Common myeloid progenitor, CD34-positive (primary cell): ENCODE measurements at regions of chr10 and their contacts with region 1.

Region 1: DNA sequence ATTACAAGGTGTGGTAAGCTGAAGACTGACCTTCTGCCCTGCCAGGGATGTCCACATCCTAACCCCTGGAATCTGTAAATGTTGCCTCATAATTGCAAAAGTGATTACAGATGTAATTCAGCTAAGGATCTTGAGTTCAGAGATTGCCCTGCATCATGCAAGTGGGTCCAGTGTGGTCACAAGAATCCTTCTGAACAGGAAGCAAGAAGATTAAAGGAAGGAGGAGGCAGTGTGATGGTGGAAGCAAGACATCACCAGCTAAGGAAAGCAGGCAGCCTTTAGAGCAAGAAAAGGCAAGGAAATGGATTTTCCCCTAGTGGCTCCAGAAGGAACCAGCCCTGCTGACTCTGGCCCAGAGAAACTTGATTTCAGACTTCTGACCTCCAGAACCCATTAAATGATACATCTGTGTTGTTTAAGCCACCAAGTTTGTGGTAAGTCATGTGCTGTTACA is 78.1 kb downstream of the USP6NL start:
- DNase-seq: peak in 2 of 3 donors; percentile 66 to 73
- H3K4me3 ChIP-seq: no peak overlapping the region
- H3K27ac ChIP-seq: no peak overlapping the region
- H3K4me1 ChIP-seq: peaks cover 20 to 57% (median 38%) of the 10 kb centered on the region in 4 experiments
- H3K27me3 ChIP-seq: no peaks in the 10 kb centered on the region

Region 2: DNA sequence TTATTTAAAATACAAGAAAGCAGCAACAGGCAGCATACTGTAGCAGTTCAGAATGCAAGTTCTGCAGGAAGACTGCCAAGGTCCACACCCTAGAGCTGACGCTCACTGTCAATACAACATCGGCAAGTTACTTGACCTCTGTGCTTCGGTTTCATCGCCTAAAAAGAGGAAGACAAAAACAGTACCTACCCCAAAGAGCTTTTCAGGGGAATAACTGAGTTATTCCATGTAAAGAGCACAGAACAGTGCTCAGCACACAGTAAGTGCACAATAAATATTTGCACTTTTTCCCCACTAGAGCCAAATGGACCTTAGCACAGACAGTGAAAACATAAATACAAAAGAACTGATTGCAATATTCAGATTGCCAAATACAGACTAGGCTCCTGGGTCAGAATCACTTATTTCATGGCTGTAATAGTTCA is 10.5 kb before region 1 on chr10:
- CTCF ChIA-PET with region 1: interaction called, 15 read pairs
- POLR2A ChIA-PET with region 1: no interaction called
- DNase-seq: no peak
- H3K4me3 ChIP-seq: no peak overlapping the region
- H3K27ac ChIP-seq: no peak overlapping the region
- H3K4me1 ChIP-seq: peaks cover 0 to 9% (median 1%) of the 10 kb centered on the region in 4 experiments
- H3K27me3 ChIP-seq: no peaks in the 10 kb centered on the region